OCI-LY7 (cell line): ENCODE measurements at regions of chr1 and their contacts with region 1.

Region 1: DNA sequence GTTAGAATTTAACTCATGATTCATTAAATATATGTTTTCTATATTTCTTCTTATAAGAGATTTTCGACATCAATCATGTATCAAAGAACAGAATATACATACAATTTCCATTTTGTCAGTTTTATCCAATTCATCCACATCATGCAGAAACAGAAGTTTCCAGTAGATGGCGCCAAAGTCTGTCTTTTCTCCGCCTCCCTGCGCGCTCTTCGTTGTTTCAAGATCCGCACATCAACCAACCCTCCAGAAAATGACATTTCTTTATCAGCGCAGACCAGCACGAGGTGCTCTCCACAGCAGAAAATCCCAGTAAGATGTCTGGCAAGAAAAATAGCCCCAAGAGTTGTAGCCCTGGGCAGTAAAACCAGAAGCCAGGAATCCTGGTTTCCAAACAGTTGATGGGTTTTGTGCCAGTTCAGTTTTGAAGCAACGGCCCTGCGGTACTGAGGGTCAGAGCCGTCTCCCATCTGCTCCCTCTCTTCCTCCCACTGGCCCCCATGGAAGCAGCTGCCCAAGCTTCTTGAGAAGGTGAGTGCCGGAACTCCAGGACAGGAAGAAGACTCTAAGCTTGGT is 38.6 kb upstream of the GPR137B start:
- DNase-seq: peak; percentile 46
- H3K4me3 ChIP-seq: no peak overlapping the region
- H3K27ac ChIP-seq: no peak overlapping the region
- H3K4me1 ChIP-seq: no peaks in the 10 kb centered on the region
- CTCF ChIP-seq: peak; percentile 97

Region 2: GRCh38 chr1:235984041-235984825 is 119.5 kb before region 1 on chr1:
- CTCF ChIA-PET with region 1: no interaction called
- POLR2A ChIA-PET with region 1: no interaction called
- intact Hi-C with region 1: no loop called
- DNase-seq: no peak
- H3K4me3 ChIP-seq: no peak overlapping the region
- H3K27ac ChIP-seq: no peak overlapping the region
- H3K4me1 ChIP-seq: no peaks in the 10 kb centered on the region
- CTCF ChIP-seq: no peak

Region 3: DNA sequence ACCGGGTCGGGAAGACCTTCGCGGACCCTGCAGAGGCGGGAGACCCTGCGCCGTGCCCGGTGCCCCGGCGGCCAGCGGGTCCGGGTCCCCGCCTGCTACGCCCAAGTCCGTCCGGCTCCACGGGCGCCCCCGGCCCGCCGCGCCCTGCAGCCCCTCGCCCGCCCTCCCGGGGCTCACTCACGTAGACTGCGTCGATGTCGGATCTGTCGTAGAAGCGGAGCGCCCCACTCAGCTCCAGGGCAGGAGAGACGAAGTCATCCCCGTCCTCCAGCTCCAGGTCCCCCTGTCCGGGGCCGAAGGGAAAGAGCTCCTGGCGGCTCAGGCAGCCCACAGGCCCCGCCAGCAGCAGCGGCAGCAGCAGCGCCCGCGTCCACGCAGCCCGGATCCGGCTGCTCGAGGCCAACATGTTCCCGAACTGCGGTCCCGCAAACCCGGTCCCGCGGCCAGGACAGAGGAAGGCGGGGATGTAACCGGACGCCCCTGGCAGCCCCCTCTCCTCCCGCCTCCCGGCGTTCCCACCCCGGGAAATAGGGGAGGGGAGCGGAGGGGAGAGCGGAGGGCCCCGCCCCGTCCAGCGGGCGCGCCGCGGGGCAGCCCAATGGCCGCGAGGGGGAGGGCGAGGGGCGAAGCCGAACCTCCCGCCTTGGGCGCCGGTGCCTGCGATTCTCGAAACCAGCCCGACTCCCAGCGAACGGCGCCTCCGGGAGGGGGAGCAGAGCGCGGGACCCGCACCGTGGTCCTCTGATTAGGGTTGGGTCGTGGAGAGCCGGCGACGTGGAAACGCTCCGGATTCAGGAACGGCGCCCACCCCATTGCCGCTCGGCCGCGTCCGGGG is 38.8 kb before region 1 on chr1 and contains the start of gene NID1:
- CTCF ChIA-PET with region 1: no interaction called
- POLR2A ChIA-PET with region 1: no interaction called
- intact Hi-C with region 1: no loop called
- DNase-seq: no peak
- H3K4me3 ChIP-seq: no peak within 1 kb of the TSS
- H3K27ac ChIP-seq: no peak within 1 kb of the TSS
- H3K4me1 ChIP-seq: no peaks in the 10 kb centered on the region
- CTCF ChIP-seq: no peak
- total RNA-seq, gene NID1: not detected in 2 replicates

Region 4: DNA sequence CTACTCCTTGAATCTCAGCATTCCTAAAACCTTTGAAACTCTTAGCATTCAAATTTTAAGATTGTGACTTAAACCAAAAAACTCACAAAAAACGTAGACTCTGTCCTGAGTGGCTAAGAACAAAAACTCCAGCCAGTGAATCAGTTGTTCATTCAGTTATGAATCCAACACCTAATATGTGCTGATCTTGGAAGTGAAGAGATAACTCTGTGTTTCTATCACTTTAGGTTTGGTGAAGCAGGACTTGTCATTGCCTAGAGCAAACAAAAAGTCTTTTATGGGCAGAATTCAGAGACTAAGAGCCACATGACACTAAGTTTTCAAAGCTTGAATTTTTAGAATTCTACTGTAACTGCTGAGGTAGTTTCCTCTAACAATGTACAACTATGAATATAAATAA is 28.2 kb after region 1 on chr1:
- CTCF ChIA-PET with region 1: no interaction called
- POLR2A ChIA-PET with region 1: no interaction called
- intact Hi-C with region 1: no loop called
- DNase-seq: no peak
- H3K4me3 ChIP-seq: no peak overlapping the region
- H3K27ac ChIP-seq: no peak overlapping the region
- H3K4me1 ChIP-seq: no peaks in the 10 kb centered on the region
- CTCF ChIP-seq: no peak

Region 5: DNA sequence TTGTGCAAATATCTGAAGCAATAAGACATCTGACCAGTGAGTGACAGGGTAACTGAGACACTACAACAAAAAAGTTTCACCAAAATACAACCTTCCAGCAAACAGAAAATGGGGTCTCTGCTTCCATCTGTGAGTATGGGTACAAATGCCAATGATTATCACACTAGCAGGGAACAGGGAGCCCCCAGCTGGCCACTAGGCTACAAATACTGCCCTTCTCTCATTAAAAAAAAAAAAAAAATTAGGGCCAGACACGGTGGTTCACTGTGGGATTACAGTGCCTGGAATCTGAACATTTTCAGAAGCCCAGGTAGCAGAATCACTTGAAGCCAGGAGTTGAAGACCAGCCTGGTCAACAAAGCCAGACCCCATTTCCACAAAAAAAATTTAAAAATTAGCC is 242.0 kb after region 1 on chr1:
- CTCF ChIA-PET with region 1: no interaction called
- POLR2A ChIA-PET with region 1: no interaction called
- intact Hi-C with region 1: loop called (anchors 10 kb)
- DNase-seq: peak; percentile 20
- H3K4me3 ChIP-seq: no peak overlapping the region
- H3K27ac ChIP-seq: no peak overlapping the region
- H3K4me1 ChIP-seq: no peaks in the 10 kb centered on the region
- CTCF ChIP-seq: peak; percentile 56

Region 6: GRCh38 chr1:236451796-236452373 is 348.2 kb after region 1 on chr1:
- CTCF ChIA-PET with region 1: no interaction called
- POLR2A ChIA-PET with region 1: no interaction called
- intact Hi-C with region 1: loop called (anchors 10 kb)
- DNase-seq: peak; percentile 30
- H3K4me3 ChIP-seq: no peak overlapping the region
- H3K27ac ChIP-seq: no peak overlapping the region
- H3K4me1 ChIP-seq: no peaks in the 10 kb centered on the region
- CTCF ChIP-seq: peak; percentile 71

Region 7: GRCh38 chr1:237124856-237125462 is 1021.2 kb after region 1 on chr1:
- CTCF ChIA-PET with region 1: no interaction called
- POLR2A ChIA-PET with region 1: no interaction called
- intact Hi-C with region 1: loop called (anchors 5 kb)
- DNase-seq: peak; percentile 19
- H3K4me3 ChIP-seq: no peak overlapping the region
- H3K27ac ChIP-seq: no peak overlapping the region
- H3K4me1 ChIP-seq: no peaks in the 10 kb centered on the region
- CTCF ChIP-seq: peak; percentile 84

Region 8: GRCh38 chr1:237386362-237387143 is 1282.8 kb after region 1 on chr1:
- CTCF ChIA-PET with region 1: no interaction called
- POLR2A ChIA-PET with region 1: no interaction called
- intact Hi-C with region 1: loop called (anchors 5 kb)
- DNase-seq: peak; percentile 49
- H3K4me3 ChIP-seq: no peak overlapping the region
- H3K27ac ChIP-seq: no peak overlapping the region
- H3K4me1 ChIP-seq: no peaks in the 10 kb centered on the region
- CTCF ChIP-seq: peak; percentile 92

Region 9: GRCh38 chr1:237562242-237562823 is 1458.6 kb after region 1 on chr1:
- CTCF ChIA-PET with region 1: no interaction called
- POLR2A ChIA-PET with region 1: no interaction called
- intact Hi-C with region 1: loop called (anchors 10 kb)
- DNase-seq: peak; percentile 75
- H3K4me3 ChIP-seq: no peak overlapping the region
- H3K27ac ChIP-seq: no peak overlapping the region
- H3K4me1 ChIP-seq: no peaks in the 10 kb centered on the region
- CTCF ChIP-seq: peak; percentile 82